GM12878 (cell line): ENCODE measurements at regions of chr12 and their contacts with region 1.

Region 1: DNA sequence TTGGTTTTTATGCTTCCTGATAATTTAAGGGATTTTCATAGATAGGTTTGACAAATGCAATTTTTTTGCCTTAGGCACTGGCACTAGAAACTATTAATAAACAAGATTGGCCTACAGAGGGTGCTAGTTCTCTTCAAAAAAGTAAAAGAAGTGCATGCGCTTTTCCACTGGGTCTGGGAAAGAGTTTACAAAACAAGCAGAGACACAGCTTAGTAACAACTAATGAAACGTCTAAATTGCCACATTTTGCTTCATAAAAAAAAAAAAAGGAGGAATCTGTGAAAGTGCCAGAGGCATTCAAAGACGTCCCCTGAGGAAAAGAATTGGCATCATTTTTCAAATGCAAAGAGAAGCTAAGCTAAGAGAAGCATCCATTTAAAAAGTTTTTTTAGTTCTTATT is 58.3 kb upstream of the EEA1 start:
- DNase-seq: no peak
- ATAC-seq: peak; percentile 54
- H3K4me3 ChIP-seq: peak overlapping the region; percentile 32; the same call in 1 of the 2 replicates
- H3K27ac ChIP-seq: peak overlapping the region; percentile 94
- H3K4me1 ChIP-seq: peaks cover 27% of the 10 kb centered on the region
- H3K27me3 ChIP-seq: no peaks in the 10 kb centered on the region
- CTCF ChIP-seq: peak; percentile 39 to 64 (median 52); a peak in 5 of 6 replicates
- EP300 ChIP-seq: peak in 1 of 2 experiments; percentile 32; a peak in 1 of 4 replicates
- POLR2A ChIP-seq: no peak
- RAD21 ChIP-seq: peak; percentile 84

Region 2: GRCh38 chr12:92668739-92669138 is 318.6 kb before region 1 on chr12:
- CTCF ChIA-PET with region 1: no interaction called
- POLR2A ChIA-PET with region 1: no interaction called
- RAD21 ChIA-PET with region 1: no interaction called
- SMC1A ChIA-PET with region 1: no interaction called
- in situ Hi-C with region 1: no loop called
- intact Hi-C with region 1: no loop called
- DNase-seq: no peak
- ATAC-seq: no peak
- H3K4me3 ChIP-seq: no peak overlapping the region
- H3K27ac ChIP-seq: no peak overlapping the region
- H3K4me1 ChIP-seq: no peaks in the 10 kb centered on the region
- H3K27me3 ChIP-seq: no peaks in the 10 kb centered on the region
- CTCF ChIP-seq: no peak
- EP300 ChIP-seq: no peak
- POLR2A ChIP-seq: no peak
- RAD21 ChIP-seq: no peak

Region 3: DNA sequence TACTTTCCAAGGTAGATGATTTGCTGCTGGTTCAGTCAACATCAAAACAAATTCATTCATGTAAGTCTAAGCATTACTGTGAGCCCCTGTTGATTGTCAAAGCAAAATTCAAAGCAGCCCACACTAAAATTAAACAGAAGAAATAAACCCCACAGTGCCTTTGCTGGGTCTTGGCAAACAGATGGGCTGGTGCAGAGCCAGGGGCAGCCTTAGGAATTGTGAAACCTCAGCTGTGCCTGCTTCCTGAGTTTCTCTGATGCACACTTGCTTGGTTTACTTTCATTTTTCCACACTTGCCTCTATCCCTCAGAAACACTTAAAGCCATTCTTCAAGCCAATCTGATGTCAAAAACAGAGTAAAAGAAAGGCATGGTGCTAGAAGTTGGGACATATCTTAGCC is 291.1 kb before region 1 on chr12:
- CTCF ChIA-PET with region 1: no interaction called
- POLR2A ChIA-PET with region 1: no interaction called
- RAD21 ChIA-PET with region 1: no interaction called
- SMC1A ChIA-PET with region 1: no interaction called
- in situ Hi-C with region 1: no loop called
- intact Hi-C with region 1: no loop called
- DNase-seq: no peak
- ATAC-seq: no peak
- H3K4me3 ChIP-seq: no peak overlapping the region
- H3K27ac ChIP-seq: no peak overlapping the region
- H3K4me1 ChIP-seq: no peaks in the 10 kb centered on the region
- H3K27me3 ChIP-seq: no peaks in the 10 kb centered on the region
- CTCF ChIP-seq: no peak
- EP300 ChIP-seq: no peak
- POLR2A ChIP-seq: no peak
- RAD21 ChIP-seq: no peak

Region 4: DNA sequence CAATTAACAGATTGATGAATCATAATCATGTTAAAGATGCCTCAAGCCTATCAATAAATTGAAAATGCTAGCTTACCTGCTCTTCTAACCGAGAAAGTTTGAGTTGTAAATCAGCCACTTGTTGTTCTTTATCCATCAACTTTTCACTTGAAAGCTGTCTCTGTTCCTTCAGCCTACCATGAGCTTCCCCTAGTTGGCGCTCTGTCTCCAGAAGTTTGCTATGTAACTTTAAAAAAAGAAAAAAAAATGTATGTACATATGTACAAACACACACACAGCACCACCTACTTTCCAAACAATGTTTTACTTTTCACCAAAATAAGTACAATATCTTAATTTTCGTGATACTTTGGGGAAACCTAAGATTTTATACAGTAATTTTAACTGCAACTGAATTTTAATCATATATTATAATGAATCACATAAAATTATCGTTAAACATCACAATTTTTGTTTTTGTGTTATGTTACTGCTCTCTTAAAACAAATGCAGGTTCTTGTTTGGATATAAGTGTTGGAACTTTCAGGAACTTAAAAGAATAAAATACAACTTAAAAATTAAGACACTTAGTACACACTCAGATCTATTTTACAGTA is 159.4 kb before region 1 on chr12:
- CTCF ChIA-PET with region 1: interaction called, 10 read pairs
- POLR2A ChIA-PET with region 1: no interaction called
- RAD21 ChIA-PET with region 1: interaction called, 10 read pairs
- SMC1A ChIA-PET with region 1: interaction called, 10 read pairs
- in situ Hi-C with region 1: no loop called
- intact Hi-C with region 1: no loop called
- DNase-seq: peak; percentile 12
- ATAC-seq: peak; percentile 81
- H3K4me3 ChIP-seq: no peak overlapping the region
- H3K27ac ChIP-seq: no peak overlapping the region
- H3K4me1 ChIP-seq: no peaks in the 10 kb centered on the region
- H3K27me3 ChIP-seq: no peaks in the 10 kb centered on the region
- CTCF ChIP-seq: peak; percentile 65 to 81 (median 81)
- EP300 ChIP-seq: no peak
- POLR2A ChIP-seq: no peak
- RAD21 ChIP-seq: peak; percentile 67

Region 5: DNA sequence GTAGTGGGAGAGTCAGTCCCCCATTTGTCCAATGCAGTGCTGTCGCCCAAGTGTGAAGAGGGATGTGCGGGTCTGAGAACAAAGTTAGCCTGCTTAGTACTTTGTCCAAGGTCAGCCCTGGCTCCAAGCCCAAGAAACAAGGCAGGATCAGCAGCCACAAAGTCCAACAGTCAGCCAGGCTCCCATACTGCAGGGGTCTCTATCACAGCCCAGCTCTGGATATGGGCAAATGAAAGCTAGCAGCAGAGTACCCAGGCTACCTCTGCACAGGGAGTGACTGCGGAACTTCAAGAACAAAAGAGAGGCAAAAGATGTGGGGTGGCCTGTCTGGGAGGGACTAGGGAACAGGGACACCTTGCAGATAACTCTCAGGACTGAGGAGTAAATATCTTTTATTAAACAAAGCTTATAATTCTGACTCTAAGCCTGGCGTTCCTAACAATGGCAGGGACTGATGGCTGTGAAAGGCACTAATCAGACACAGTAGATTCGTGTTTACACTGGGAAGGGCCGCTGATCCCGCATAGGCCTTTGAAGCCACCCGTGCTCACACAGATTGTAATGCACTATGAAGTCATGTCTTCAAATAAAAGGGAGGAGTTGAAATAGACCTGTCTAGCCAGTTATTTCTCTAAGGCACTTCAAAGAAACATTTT is 32.7 kb after region 1 on chr12:
- CTCF ChIA-PET with region 1: interaction called, 22 read pairs
- POLR2A ChIA-PET with region 1: no interaction called
- RAD21 ChIA-PET with region 1: interaction called, 7 read pairs
- SMC1A ChIA-PET with region 1: interaction called, 420 read pairs
- in situ Hi-C with region 1: no loop called
- intact Hi-C with region 1: loop called (anchors 2 kb)
- DNase-seq: no peak
- ATAC-seq: no peak
- H3K4me3 ChIP-seq: no peak overlapping the region
- H3K27ac ChIP-seq: no peak overlapping the region
- H3K4me1 ChIP-seq: no peaks in the 10 kb centered on the region
- H3K27me3 ChIP-seq: no peaks in the 10 kb centered on the region
- CTCF ChIP-seq: no peak
- EP300 ChIP-seq: no peak
- POLR2A ChIP-seq: no peak
- RAD21 ChIP-seq: no peak

Region 6: GRCh38 chr12:93104535-93104934 is 117.2 kb after region 1 on chr12:
- CTCF ChIA-PET with region 1: interaction called, 13 read pairs
- POLR2A ChIA-PET with region 1: interaction called, 3 read pairs
- RAD21 ChIA-PET with region 1: interaction called, 10 read pairs
- SMC1A ChIA-PET with region 1: interaction called, 6 read pairs
- in situ Hi-C with region 1: no loop called
- intact Hi-C with region 1: no loop called
- DNase-seq: no peak
- ATAC-seq: no peak
- H3K4me3 ChIP-seq: no peak overlapping the region
- H3K27ac ChIP-seq: no peak overlapping the region
- H3K4me1 ChIP-seq: peaks cover 9% of the 10 kb centered on the region
- H3K27me3 ChIP-seq: no peaks in the 10 kb centered on the region
- CTCF ChIP-seq: no peak
- EP300 ChIP-seq: no peak
- POLR2A ChIP-seq: no peak
- RAD21 ChIP-seq: no peak

Region 7: GRCh38 chr12:93297032-93297431 is 309.7 kb after region 1 on chr12:
- CTCF ChIA-PET with region 1: interaction called, 6 read pairs
- POLR2A ChIA-PET with region 1: interaction called, 4 read pairs
- RAD21 ChIA-PET with region 1: interaction called, 11 read pairs
- SMC1A ChIA-PET with region 1: interaction called, 13 read pairs
- in situ Hi-C with region 1: no loop called
- intact Hi-C with region 1: no loop called
- DNase-seq: peak; percentile 75
- ATAC-seq: peak; percentile 95
- H3K4me3 ChIP-seq: peak overlapping the region; percentile 25
- H3K27ac ChIP-seq: peak overlapping the region; percentile 73
- H3K4me1 ChIP-seq: peaks cover 17% of the 10 kb centered on the region
- H3K27me3 ChIP-seq: no peaks in the 10 kb centered on the region
- CTCF ChIP-seq: no peak
- EP300 ChIP-seq: no peak
- POLR2A ChIP-seq: no peak
- RAD21 ChIP-seq: 0 out of 2 replicates have a peak, but pooled peaks have one; percentile 13

Region 8: GRCh38 chr12:93347054-93347776 is 359.9 kb after region 1 on chr12:
- CTCF ChIA-PET with region 1: no interaction called
- POLR2A ChIA-PET with region 1: no interaction called
- RAD21 ChIA-PET with region 1: no interaction called
- SMC1A ChIA-PET with region 1: no interaction called
- in situ Hi-C with region 1: no loop called
- intact Hi-C with region 1: no loop called
- DNase-seq: no peak
- ATAC-seq: no peak
- H3K4me3 ChIP-seq: no peak overlapping the region
- H3K27ac ChIP-seq: no peak overlapping the region
- H3K4me1 ChIP-seq: no peaks in the 10 kb centered on the region
- H3K27me3 ChIP-seq: no peaks in the 10 kb centered on the region
- CTCF ChIP-seq: no peak
- EP300 ChIP-seq: no peak
- POLR2A ChIP-seq: no peak
- RAD21 ChIP-seq: no peak

Region 9: DNA sequence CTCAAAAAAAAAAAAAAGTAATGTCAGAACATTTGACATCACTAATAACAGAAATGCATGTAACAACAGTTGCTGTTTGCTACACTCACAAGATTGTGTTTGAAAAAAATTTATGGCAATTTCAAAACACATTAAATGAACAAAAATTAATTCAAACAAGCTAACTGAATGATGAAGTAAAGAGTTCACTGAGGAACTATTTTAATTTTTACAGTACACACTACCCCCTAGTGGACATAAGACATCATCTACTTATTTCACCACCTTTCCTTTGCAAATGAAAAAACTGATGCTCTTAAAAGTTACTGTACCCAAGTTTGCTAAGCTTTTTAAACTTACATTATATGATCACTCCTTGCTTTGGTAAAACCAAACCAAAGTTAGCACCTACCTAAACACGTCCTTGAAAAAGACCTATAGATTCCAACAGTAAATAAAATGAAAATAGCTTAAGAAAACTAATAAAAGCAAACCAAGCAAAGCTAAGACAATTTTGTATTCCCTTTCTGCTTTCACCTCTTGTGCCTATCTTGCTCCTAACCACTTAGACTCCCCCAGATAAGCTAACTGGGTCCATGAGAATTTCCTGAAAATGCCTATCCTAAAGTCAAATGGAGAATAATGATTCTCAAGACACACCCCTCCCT is 432.1 kb after region 1 on chr12:
- CTCF ChIA-PET with region 1: interaction called, 166 read pairs
- POLR2A ChIA-PET with region 1: interaction called, 9 read pairs
- RAD21 ChIA-PET with region 1: interaction called, 123 read pairs
- SMC1A ChIA-PET with region 1: interaction called, 95 read pairs
- in situ Hi-C with region 1: no loop called
- intact Hi-C with region 1: loop called (anchors 1 kb)
- DNase-seq: no peak
- ATAC-seq: peak; percentile 54
- H3K4me3 ChIP-seq: no peak overlapping the region
- H3K27ac ChIP-seq: no peak overlapping the region
- H3K4me1 ChIP-seq: peaks cover 83% of the 10 kb centered on the region
- H3K27me3 ChIP-seq: no peaks in the 10 kb centered on the region
- CTCF ChIP-seq: peak; percentile 48 to 58 (median 54); a peak in 5 of 6 replicates
- EP300 ChIP-seq: no peak
- POLR2A ChIP-seq: no peak
- RAD21 ChIP-seq: peak; percentile 46; the same call in 1 of the 2 replicates